B cell (primary cell): ENCODE measurements at regions of chr5 and their contacts with region 1.

Region 1: GRCh38 chr5:134904630-134905245 is at the start of gene PCBD2:
- DNase-seq: peak; percentile 95
- ATAC-seq: peak; percentile 75
- H3K4me3 ChIP-seq: peak within 1 kb of the TSS; percentile 70 to 88 (median 82)
- H3K4me3 Mint-ChIP-seq: peak within 1 kb of the TSS; percentile 91
- H3K27ac ChIP-seq: peak within 1 kb of the TSS; percentile 80 to 96
- H3K27ac Mint-ChIP-seq: peak within 1 kb of the TSS; percentile 99
- H3K4me1 ChIP-seq: peaks cover 32 to 42% of the 10 kb centered on the region in 2 donors
- H3K4me1 Mint-ChIP-seq: peaks cover 35% of the 10 kb centered on the region
- H3K27me3 ChIP-seq: no peaks in the 10 kb centered on the region
- H3K27me3 Mint-ChIP-seq: no peaks in the 10 kb centered on the region
- CTCF ChIP-seq: peak; percentile 90
- total RNA-seq, gene PCBD2: 15.7 and 20.9 TPM in 2 replicates

Region 2: DNA sequence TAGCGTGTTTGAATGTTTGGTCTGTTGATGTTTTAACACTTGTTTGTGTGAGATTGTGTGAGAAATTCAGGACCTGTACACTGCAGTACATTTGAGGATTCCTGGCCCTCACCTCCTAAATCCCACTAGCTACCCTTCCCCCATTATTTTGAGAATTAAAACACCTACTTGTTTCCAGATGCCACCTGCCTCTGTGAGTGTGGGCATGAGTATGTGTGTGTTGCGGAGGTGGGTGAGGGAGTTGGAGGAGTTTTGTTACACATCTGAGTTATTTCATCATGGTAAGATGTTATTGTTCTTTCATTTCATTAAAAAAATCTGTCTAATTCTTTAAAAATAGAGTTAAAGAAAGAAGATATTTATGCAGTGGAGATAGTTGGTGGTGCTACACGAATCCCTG is 1816.7 kb before region 1 on chr5:
- CTCF ChIA-PET with region 1: no interaction called
- POLR2A ChIA-PET with region 1: interaction called, 12 read pairs
- intact Hi-C with region 1: no loop called
- DNase-seq: no peak
- ATAC-seq: no peak
- H3K4me3 ChIP-seq: no peak overlapping the region
- H3K4me3 Mint-ChIP-seq: no peak overlapping the region
- H3K27ac ChIP-seq: no peak overlapping the region
- H3K27ac Mint-ChIP-seq: peak overlapping the region; percentile 41
- H3K4me1 ChIP-seq: no peaks in the 10 kb centered on the region
- H3K4me1 Mint-ChIP-seq: peaks cover 3% of the 10 kb centered on the region
- H3K27me3 ChIP-seq: no peaks in the 10 kb centered on the region
- H3K27me3 Mint-ChIP-seq: no peaks in the 10 kb centered on the region
- CTCF ChIP-seq: no peak

Region 3: DNA sequence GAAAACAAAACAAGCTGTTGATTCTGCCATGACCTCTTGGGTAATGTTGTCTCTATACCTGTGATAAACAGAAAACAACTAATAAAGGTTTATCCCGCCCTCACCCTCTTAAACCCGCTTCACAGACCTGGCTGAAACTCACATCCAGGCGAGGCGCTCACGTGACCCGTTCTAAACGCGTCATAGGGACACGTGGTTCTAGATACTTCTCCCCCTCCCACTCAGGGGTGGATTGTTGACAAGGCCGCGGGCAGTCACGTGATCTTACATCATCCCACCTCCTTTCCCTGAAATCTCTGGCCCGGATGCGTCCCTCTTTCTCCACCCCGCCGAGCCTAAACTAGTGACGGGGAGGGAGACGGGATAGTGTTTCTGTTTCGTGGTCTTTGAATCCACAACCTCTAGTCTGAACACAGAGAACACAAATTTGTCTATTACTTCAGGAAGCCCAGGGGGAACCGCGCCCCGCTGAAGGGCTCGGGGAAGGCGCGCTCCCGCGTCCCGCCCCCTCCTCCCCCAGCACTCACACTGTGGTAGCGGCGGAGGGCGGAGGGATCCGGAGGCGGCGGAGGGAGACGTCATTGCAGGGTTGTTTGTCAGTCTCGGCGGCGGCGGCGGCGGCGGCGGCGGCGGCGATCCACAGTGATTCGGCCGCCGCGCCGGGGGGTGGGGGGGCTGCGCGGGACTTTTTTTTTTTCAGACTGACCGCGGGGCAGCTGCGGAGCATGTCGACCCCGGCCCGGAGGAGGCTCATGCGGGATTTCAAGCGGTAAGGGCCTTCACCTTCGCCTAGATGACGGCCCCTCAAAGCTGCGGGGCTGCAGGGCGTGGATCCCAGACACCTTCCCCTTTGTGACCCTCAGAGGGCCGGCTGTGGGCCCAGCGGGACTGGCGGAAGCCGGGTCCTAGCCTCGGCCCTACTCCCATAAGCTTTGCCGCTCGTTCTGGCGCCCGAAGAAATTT is 533.6 kb before region 1 on chr5 and contains the start of gene UBE2B:
- CTCF ChIA-PET with region 1: no interaction called
- POLR2A ChIA-PET with region 1: interaction called, 7 read pairs
- intact Hi-C with region 1: loop called (anchors 2 kb)
- DNase-seq: peak; percentile 99
- ATAC-seq: peak; percentile 79
- H3K4me3 ChIP-seq: peak within 1 kb of the TSS; percentile 78 to 99 (median 92)
- H3K4me3 Mint-ChIP-seq: peak within 1 kb of the TSS; percentile 98
- H3K27ac ChIP-seq: peak within 1 kb of the TSS; percentile 97 to 99
- H3K27ac Mint-ChIP-seq: peak within 1 kb of the TSS; percentile 100
- H3K4me1 ChIP-seq: peaks cover 24 to 32% of the 10 kb centered on the region in 2 donors
- H3K4me1 Mint-ChIP-seq: peaks cover 48% of the 10 kb centered on the region
- H3K27me3 ChIP-seq: no peaks in the 10 kb centered on the region
- H3K27me3 Mint-ChIP-seq: no peaks in the 10 kb centered on the region
- CTCF ChIP-seq: no peak
- total RNA-seq, gene UBE2B: 106 and 110 TPM in 2 replicates

Region 4: DNA sequence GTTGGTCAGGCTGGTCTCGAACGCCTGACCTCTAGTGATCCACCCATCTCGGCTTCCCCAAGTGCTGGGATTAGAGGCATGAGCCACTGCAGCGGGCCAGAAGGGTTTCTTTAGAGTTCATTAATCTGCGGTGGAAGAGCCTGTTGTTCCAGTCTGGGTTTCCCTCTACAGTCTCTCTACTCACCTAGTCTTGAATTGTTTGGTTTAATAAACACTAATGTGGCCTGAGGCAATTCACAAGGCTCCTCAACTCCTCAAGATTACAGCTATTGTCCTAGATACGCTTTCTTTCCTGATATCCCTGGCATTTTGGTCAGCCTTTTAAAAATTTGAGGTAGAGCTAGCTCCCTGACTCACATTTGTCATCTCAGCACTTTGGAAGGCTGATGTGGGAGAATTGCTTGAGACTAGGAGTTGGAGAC is 267.6 kb before region 1 on chr5:
- CTCF ChIA-PET with region 1: no interaction called
- POLR2A ChIA-PET with region 1: interaction called, 3 read pairs
- intact Hi-C with region 1: loop called (anchors 1 kb)
- DNase-seq: no peak
- ATAC-seq: no peak
- H3K4me3 ChIP-seq: no peak overlapping the region
- H3K4me3 Mint-ChIP-seq: no peak overlapping the region
- H3K27ac ChIP-seq: no peak overlapping the region
- H3K27ac Mint-ChIP-seq: no peak overlapping the region
- H3K4me1 ChIP-seq: peaks cover under 1 to 4% of the 10 kb centered on the region in 2 donors
- H3K4me1 Mint-ChIP-seq: peaks cover 6% of the 10 kb centered on the region
- H3K27me3 ChIP-seq: no peaks in the 10 kb centered on the region
- H3K27me3 Mint-ChIP-seq: no peaks in the 10 kb centered on the region
- CTCF ChIP-seq: no peak

Region 5: GRCh38 chr5:134758504-134759341 is 146.0 kb before region 1 on chr5 and contains the start of gene DDX46:
- CTCF ChIA-PET with region 1: interaction called, 26 read pairs
- POLR2A ChIA-PET with region 1: interaction called, 8 read pairs
- intact Hi-C with region 1: loop called (anchors 1 kb)
- DNase-seq: peak; percentile 95
- ATAC-seq: peak; percentile 99
- H3K4me3 ChIP-seq: peak within 1 kb of the TSS; percentile 77 to 97 (median 86)
- H3K4me3 Mint-ChIP-seq: peak within 1 kb of the TSS; percentile 100
- H3K27ac ChIP-seq: peak within 1 kb of the TSS; percentile 54 to 80
- H3K27ac Mint-ChIP-seq: peak within 1 kb of the TSS; percentile 97
- H3K4me1 ChIP-seq: peaks cover 18 to 19% of the 10 kb centered on the region in 2 donors
- H3K4me1 Mint-ChIP-seq: peaks cover 36% of the 10 kb centered on the region
- H3K27me3 ChIP-seq: no peaks in the 10 kb centered on the region
- H3K27me3 Mint-ChIP-seq: no peaks in the 10 kb centered on the region
- CTCF ChIP-seq: peak; percentile 78
- total RNA-seq, gene DDX46: 75.7 and 80.9 TPM in 2 replicates

Region 6: GRCh38 chr5:134845852-134846640 is 58.7 kb before region 1 on chr5 and contains the start of gene C5orf24:
- CTCF ChIA-PET with region 1: interaction called, 36 read pairs
- POLR2A ChIA-PET with region 1: interaction called, 32 read pairs
- intact Hi-C with region 1: loop called (anchors 1 kb)
- DNase-seq: peak; percentile 97
- ATAC-seq: peak; percentile 91
- H3K4me3 ChIP-seq: peak within 1 kb of the TSS; percentile 84 to 93 (median 87)
- H3K4me3 Mint-ChIP-seq: peak within 1 kb of the TSS; percentile 95
- H3K27ac ChIP-seq: peak within 1 kb of the TSS; percentile 86 to 93
- H3K27ac Mint-ChIP-seq: peak within 1 kb of the TSS; percentile 95
- H3K4me1 ChIP-seq: peaks cover 17 to 21% of the 10 kb centered on the region in 2 donors
- H3K4me1 Mint-ChIP-seq: peaks cover 25% of the 10 kb centered on the region
- H3K27me3 ChIP-seq: no peaks in the 10 kb centered on the region
- H3K27me3 Mint-ChIP-seq: no peaks in the 10 kb centered on the region
- CTCF ChIP-seq: no peak
- total RNA-seq, gene C5orf24: 38.2 and 44.2 TPM in 2 replicates

Region 7: GRCh38 chr5:134935711-134936602 is 31.2 kb after region 1 on chr5:
- CTCF ChIA-PET with region 1: no interaction called
- POLR2A ChIA-PET with region 1: no interaction called
- intact Hi-C with region 1: no loop called
- DNase-seq: no peak
- ATAC-seq: no peak
- H3K4me3 ChIP-seq: no peak overlapping the region
- H3K4me3 Mint-ChIP-seq: no peak overlapping the region
- H3K27ac ChIP-seq: no peak overlapping the region
- H3K27ac Mint-ChIP-seq: no peak overlapping the region
- H3K4me1 ChIP-seq: no peaks in the 10 kb centered on the region
- H3K4me1 Mint-ChIP-seq: no peaks in the 10 kb centered on the region
- H3K27me3 ChIP-seq: no peaks in the 10 kb centered on the region
- H3K27me3 Mint-ChIP-seq: no peaks in the 10 kb centered on the region
- CTCF ChIP-seq: no peak

Region 8: DNA sequence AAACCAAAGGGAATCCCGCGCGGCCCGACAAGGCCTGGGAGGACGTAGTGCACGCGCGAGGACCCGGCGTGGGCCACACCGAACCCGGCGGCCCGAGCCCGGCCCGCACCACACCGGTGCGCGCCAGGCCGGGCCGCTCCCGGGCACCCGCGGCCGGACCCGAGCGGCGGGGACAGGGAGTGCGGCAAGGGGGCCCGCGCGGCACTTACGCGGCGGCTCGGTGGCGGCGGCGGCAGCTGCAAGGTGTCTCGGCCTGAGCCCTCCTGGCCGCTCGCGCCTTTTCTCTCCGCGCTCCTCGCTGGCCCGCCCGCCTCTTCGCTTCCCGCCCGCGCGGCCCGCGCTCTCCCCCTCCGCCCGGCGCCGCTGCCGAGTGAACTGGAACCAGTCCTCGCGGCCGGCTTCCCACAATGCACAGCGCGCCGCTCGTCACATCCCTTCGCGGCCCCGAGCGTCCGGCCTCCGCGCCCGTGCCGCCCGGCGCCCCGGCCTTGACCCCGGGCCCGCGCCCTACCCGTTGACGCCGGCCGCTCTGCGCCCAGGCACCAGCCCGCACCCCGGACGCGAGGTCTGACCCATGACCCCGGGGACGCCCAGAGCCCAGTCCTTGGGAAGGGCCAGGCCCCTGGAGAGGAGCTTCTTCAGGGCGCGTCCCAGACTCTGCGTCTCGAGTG is 494.2 kb after region 1 on chr5 and contains the start of gene MACROH2A1:
- CTCF ChIA-PET with region 1: no interaction called
- POLR2A ChIA-PET with region 1: no interaction called
- intact Hi-C with region 1: loop called (anchors 2 kb)
- DNase-seq: peak; percentile 90
- ATAC-seq: peak; percentile 91
- H3K4me3 ChIP-seq: peak within 1 kb of the TSS; percentile 61 to 80 (median 72)
- H3K4me3 Mint-ChIP-seq: peak within 1 kb of the TSS; percentile 92
- H3K27ac ChIP-seq: peak within 1 kb of the TSS; percentile 81 to 92
- H3K27ac Mint-ChIP-seq: peak within 1 kb of the TSS; percentile 92
- H3K4me1 ChIP-seq: peaks cover 30 to 36% of the 10 kb centered on the region in 2 donors
- H3K4me1 Mint-ChIP-seq: peaks cover 50% of the 10 kb centered on the region
- H3K27me3 ChIP-seq: no peaks in the 10 kb centered on the region
- H3K27me3 Mint-ChIP-seq: no peaks in the 10 kb centered on the region
- CTCF ChIP-seq: no peak
- total RNA-seq, gene MACROH2A1: 99.7 and 100.0 TPM in 2 replicates